ENCODE measurements at regions of chr17 and their contacts with region 1.

Region 1: DNA sequence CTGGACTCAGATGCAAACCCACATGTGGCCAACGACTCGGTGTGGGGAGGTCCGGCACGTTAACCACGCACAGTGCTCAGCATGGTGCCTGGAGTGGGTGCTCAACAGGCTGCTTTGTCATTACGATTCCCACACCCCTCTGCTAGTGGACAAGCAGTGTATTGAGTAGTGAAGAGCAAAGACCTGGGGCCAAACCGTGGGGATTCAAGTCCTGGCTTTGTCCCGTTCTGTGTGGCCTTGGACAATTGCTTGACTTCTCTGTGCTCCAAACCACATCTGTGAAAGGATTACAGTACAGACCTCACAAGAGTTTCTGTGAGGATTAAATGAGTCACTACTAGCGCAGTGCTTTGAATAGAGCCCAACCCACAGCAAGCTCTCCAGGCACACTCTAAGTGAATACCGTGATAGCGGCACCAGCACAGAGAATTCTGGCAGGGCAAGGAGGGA is 33.8 kb downstream of the TRPV2 start:
- DNase-seq: no peak

Region 2: GRCh38 chr17:16353317-16354174 is 95.6 kb before region 1 on chr17 and contains the start of gene CENPV:
- intact Hi-C with region 1: loop called in 1 of 2 experiments (anchors 1 kb)
- DNase-seq: peak; percentile 69
- total RNA-seq, gene CENPV: 15.8 to 25.9 TPM

Region 3: DNA sequence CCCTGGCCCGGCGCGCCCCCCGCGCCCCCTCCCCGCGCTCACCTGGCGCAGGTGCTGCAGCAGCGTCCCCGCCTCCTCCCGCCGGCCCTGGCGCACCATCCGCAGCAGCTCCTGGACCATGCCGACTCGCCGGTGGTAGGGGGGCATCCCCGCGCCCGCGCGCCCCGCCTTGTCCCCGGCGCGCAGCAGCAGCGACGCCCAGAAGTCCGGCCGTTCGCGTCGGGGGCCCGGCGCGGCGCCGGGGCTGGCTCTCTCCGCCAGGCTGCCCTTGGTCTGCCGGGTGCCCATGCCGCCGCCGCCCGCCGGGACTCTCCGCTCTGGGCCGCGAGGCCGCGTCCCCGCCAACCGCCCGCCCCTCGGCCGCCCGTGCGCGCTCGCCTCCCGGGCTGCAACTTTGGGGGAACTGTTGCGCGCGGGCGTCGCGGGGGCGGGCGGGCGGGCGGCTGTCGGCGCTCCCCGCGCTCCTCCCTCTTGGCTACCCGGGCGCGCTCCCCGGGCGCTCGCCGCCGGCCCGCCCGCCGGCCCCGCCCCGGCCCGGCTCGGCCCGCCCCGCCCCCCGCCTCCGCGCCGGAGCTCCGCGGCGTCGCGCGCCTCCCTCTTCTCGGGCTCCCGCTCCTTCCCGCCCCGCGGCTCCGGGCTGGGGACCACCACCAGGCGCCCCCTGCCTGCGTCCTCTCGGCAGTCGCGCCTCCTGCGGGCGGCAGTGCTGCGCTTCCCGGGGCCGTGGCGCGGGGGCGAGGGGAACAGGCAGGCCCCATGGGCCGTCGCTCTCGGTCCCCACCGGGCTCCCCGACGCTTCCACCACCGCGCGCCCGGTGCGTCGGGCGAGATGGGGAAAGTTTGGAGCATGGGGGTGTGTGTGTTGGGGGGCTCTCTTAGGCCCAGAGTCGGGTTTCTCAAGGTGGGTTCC is 42.8 kb after region 1 on chr17 and contains the start of gene LRRC75A:
- intact Hi-C with region 1: loop called in 1 of 2 experiments (anchors 1 kb)
- DNase-seq: no peak
- total RNA-seq, gene LRRC75A: 2.3 to 3.0 TPM

Region 4: DNA sequence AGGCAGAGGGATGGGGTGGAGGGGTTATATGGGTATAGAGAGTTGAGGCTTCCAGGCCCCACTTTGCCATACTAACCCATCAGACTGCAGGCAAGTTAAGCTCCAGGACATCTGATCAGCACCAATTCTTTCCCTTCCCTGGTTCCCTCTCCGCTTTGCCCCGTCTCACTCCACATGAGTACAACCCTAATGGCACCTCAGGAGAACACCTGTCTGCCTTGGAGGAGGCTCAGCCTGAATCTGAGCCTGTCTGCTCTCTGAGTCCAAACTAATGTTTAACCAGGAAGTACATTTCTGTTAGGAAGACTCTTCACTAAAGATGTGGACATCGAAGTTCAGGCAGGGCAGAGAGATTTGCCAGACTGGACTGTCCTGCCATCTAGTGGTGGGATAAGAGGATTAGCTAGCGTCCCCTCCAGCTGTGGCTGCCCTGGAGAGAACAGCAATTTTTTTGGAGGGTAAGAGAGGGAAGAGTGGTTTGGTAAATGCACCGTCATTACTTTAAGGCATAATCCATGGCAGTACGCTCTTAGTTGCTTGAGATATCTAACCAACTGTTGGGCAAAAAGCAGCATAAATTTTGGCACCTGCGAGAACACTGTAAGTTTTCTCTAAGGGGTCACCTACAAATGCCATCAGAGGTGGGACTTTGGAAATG is 72.1 kb after region 1 on chr17:
- intact Hi-C with region 1: loop called (anchors 2 kb)
- DNase-seq: no peak